ENCODE measurements at regions of chr3 and their contacts with region 1.

Region 1: DNA sequence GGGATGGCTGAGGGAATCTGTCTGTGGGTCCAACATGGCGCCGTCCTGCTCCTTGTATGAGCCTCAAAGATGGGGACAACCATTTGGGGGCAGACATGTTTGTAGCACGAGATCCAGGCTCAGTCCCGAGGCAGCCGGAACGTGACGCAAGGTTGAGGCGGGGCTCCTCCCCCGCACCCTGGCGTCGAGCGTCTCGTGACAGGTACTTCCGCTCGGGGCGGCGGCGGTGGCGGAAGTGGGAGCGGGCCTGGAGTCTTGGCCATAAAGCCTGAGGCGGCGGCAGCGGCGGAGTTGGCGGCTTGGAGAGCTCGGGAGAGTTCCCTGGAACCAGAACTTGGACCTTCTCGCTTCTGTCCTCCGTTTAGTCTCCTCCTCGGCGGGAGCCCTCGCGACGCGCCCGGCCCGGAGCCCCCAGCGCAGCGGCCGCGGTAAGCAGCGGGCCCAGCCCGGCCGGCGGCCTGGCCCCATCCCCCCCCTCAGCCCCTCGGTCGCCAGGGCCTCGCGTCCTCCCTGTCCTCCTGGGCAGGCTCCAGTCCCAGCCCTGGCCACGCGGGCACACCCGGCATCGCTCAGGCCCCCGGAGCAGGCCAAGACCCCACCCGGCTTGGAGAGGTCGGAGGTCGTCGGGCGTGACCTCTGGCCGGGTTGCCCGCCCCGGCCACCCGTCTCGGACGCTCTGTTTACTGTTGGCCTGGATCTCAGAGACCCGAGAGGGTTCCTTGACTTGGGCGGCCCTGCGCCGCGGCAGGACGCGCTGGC is at the start of gene RAB7A:
- DNase-seq: peak; percentile 93
- ATAC-seq: peak; percentile 94
- H3K4me3 Mint-ChIP-seq: peak within 1 kb of the TSS; percentile 93
- H3K27ac Mint-ChIP-seq: peak within 1 kb of the TSS; percentile 91
- H3K4me1 Mint-ChIP-seq: peaks cover 61% of the 10 kb centered on the region
- H3K27me3 Mint-ChIP-seq: peaks cover 7% of the 10 kb centered on the region
- CTCF ChIP-seq: no peak
- total RNA-seq, gene RAB7A: 169 and 190 TPM in 2 replicates

Region 2: DNA sequence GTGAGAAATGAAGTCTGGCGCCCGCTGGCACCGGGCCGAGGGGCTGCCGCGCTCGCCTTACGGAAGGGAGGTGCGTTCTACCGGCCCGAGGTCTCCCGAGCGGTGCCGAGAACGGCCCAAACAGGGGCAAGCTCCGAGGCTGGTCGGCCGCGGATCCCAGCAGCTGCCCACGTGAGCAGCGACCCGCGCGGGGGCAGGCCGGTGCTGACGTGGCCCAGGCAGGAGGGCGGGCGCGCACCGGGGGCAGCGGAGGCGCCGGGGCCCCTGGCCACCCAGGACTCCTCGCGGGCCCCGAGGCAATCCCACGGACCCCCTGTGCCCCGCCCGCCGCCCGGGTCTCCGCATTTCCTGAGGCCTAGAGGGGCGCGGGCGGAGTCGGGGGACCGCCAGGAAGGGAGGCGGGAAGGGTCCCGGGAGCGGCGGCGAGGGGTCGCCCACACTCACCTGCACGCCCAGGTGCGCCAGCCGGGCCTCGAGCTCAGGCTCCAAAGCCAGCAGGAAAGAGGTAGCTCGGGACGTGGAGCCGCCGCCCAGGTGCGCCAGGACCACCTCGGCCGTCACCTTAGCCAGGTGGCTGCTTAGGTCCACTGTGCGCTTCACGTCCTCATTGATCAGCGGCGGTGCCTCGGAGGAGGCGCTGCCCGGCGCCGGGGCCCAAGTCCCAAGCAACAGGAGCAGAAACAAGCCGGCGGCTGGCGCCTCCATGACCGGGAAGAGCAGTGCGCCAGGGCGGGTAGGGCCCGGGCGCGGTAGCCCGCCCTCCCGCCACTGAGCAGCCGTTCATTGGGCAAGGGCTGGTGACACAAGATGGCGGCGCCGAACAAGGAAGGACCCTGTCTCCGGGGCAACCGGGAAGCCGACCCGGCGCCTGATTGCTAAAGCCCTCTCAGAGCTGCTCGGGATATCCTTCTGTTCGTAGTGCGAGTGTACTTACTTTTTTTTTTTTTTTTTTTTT is 75.7 kb before region 1 on chr3 and contains the start of gene RPN1:
- CTCF ChIA-PET with region 1: no interaction called
- POLR2A ChIA-PET with region 1: interaction called, 5 read pairs
- intact Hi-C with region 1: loop called (anchors 1 kb)
- DNase-seq: peak; percentile 90
- ATAC-seq: peak; percentile 97
- H3K4me3 Mint-ChIP-seq: peak within 1 kb of the TSS; percentile 89
- H3K27ac Mint-ChIP-seq: peak within 1 kb of the TSS; percentile 86
- H3K4me1 Mint-ChIP-seq: peaks cover 41% of the 10 kb centered on the region
- H3K27me3 Mint-ChIP-seq: no peaks in the 10 kb centered on the region
- CTCF ChIP-seq: no peak
- total RNA-seq, gene RPN1: 93.4 and 95.2 TPM in 2 replicates

Region 3: DNA sequence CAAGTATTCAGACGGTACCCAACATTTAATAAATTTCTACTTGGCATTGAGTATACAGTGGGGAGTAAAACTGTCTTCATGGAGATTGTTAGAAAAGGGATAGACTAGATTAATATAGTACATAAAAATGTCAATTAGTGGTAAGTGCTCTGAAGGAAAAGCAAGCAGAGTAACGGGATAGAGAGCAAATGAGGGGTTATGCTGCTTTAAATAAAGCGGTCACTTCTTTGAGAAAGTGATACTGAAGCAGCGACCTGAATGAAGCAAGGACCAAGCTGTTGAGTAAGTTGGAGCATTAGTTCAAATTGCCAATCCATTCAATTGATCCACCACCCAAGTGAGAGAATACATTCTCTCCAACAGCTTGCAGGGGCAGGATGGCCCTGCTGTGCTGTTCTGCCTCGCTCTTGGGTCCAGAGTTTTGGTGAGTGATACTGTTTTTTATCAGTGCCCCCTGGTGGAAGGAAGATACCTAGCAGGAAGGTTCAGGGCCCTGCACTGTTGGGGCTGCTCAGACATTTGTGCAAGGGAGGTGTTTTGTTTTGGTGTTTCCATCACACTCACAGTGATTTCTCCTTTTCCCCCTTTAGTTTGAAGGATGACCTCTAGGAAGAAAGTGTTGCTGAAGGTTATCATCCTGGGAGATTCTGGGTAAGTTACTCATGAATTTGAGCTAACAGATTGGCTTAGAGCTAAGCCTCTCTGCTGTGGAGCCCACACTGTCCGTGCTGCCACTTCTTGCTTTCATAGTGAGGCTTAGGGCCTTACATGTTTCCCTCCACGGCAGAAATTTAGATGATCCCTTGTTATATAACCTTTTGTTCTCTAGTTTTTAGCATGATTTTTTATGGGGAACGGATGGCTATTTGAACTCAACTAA is 68.9 kb after region 1 on chr3:
- CTCF ChIA-PET with region 1: interaction called, 10 read pairs
- POLR2A ChIA-PET with region 1: no interaction called
- intact Hi-C with region 1: loop called (anchors 2 kb)
- DNase-seq: no peak
- ATAC-seq: peak; percentile 100
- H3K4me3 Mint-ChIP-seq: no peak overlapping the region
- H3K27ac Mint-ChIP-seq: peak overlapping the region; percentile 30
- H3K4me1 Mint-ChIP-seq: peaks cover 50% of the 10 kb centered on the region
- H3K27me3 Mint-ChIP-seq: no peaks in the 10 kb centered on the region
- CTCF ChIP-seq: no peak

Region 4: GRCh38 chr3:128804017-128804810 is 78.1 kb after region 1 on chr3:
- CTCF ChIA-PET with region 1: no interaction called
- POLR2A ChIA-PET with region 1: no interaction called
- intact Hi-C with region 1: loop called (anchors 1 kb)
- DNase-seq: no peak
- ATAC-seq: peak; percentile 94
- H3K4me3 Mint-ChIP-seq: peak overlapping the region; percentile 55
- H3K27ac Mint-ChIP-seq: peak overlapping the region; percentile 83
- H3K4me1 Mint-ChIP-seq: peaks cover 54% of the 10 kb centered on the region
- H3K27me3 Mint-ChIP-seq: no peaks in the 10 kb centered on the region
- CTCF ChIP-seq: no peak